Vagina (tissue), 2 donors: ENCODE measurements at regions of chr7 and their contacts with region 1.

Region 1: GRCh38 chr7:139777948-139778841 is at the start of gene HIPK2:
- DNase-seq: no peak
- H3K4me3 ChIP-seq: peak within 1 kb of the TSS; percentile 63 to 92
- H3K27ac ChIP-seq: peak within 1 kb of the TSS; percentile 95
- H3K4me1 ChIP-seq: peaks cover 23% of the 10 kb centered on the region
- H3K27me3 ChIP-seq: no peaks in the 10 kb centered on the region
- CTCF ChIP-seq: no peak
- POLR2A ChIP-seq: no peak
- total RNA-seq, gene HIPK2: 21.9 TPM

Region 2: DNA sequence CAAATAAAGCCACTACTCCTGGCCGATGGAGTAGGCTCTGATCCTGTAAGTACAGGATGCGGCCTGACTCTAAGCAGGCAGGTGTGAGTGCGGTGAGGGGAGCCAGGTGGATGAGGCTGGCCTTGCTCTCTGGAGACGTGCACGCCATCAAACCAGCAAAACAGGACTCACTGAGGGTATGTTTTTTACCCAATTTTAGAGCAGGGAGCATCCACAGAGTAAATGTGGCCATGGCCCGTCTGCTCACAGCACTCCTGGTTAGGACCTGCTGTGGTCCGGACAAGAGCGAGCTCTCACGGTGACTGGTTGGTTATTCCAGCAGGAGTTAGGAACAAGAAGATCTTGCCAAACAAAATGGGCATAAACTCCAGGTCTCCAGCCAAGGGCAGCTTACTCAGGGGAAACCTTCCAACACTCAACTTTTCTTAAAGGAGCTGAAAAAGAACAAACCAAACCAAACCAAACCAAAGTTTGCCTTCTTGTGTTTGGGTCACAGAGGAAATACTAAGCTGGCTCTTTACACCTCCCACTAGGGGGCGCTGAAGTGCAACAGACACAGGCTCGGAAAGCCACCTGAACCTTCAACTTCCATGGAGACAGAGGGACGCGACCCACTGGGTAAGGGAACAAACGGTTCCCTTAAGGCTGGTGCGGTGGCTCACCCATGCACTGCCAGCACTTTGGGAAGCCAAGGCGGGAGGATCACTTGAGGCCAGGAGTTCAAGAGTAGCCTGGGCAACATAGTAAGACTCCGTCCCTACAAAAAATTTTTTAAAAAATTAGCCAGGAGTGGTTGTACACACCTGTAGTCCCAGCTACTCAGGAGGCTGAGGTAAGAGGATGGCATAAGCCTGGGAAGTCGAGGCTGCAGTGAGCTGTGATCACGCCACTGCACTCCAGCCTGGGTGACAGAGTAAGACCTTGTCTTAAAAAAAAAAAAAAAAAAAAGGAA is 132.3 kb before region 1 on chr7:
- intact Hi-C with region 1: loop called (anchors 5 kb)
- DNase-seq: no peak
- H3K4me3 ChIP-seq: no peak overlapping the region
- H3K27ac ChIP-seq: no peak overlapping the region
- H3K4me1 ChIP-seq: peaks cover 5% of the 10 kb centered on the region
- H3K27me3 ChIP-seq: no peaks in the 10 kb centered on the region
- CTCF ChIP-seq: peak; percentile 76 to 89 (median 78)
- POLR2A ChIP-seq: no peak

Region 3: DNA sequence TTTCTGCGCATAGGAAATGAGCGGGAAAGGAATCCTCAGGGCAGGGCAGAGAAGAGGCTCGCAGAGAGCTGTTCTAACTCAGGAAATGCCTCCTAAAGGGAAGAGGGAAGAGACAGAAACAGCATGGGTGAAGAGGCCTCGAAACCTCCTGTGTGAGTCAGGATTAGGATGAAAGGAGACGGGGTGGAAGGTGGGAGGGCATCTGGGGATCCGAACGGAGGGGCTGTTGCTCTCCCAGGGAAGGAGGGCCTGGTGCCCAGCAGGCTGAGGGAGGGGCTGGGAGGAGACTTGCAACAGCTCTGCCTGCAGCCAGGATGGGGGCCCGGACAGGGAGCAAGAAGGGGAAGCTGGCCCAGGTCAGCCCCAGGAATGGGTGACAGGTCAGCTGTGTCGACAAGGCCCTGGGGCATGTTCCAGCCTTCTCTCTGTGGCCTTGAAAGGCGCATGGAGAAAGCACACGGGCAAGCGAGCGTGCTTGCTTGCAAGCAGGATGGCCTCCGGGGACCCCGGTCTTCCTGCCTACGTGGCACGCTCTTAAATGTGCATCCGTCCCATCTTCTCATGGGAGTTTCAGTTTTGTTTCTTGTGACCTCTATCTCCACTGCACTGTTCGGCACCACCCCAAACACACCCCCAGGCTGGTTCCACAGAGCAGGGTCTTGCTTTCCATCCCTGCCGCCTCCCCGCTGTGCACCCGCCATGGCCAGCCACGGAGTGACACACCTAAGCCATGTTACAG is 63.9 kb before region 1 on chr7:
- intact Hi-C with region 1: loop called (anchors 10 kb)
- DNase-seq: no peak
- H3K4me3 ChIP-seq: no peak overlapping the region
- H3K27ac ChIP-seq: peak overlapping the region; percentile 23
- H3K4me1 ChIP-seq: peaks cover 13% of the 10 kb centered on the region
- H3K27me3 ChIP-seq: no peaks in the 10 kb centered on the region
- CTCF ChIP-seq: no peak
- POLR2A ChIP-seq: no peak

Region 4: GRCh38 chr7:139737221-139738100 is 40.7 kb before region 1 on chr7:
- intact Hi-C with region 1: loop called (anchors 5 kb)
- DNase-seq: peak in 1 of 2 donors; percentile 75
- H3K4me3 ChIP-seq: no peak overlapping the region
- H3K27ac ChIP-seq: peak overlapping the region; percentile 55
- H3K4me1 ChIP-seq: peaks cover 81% of the 10 kb centered on the region
- H3K27me3 ChIP-seq: no peaks in the 10 kb centered on the region
- CTCF ChIP-seq: no peak
- POLR2A ChIP-seq: no peak

Region 5: GRCh38 chr7:140003913-140004382 is 225.8 kb after region 1 on chr7:
- intact Hi-C with region 1: loop called (anchors 5 kb)
- DNase-seq: no peak
- H3K4me3 ChIP-seq: no peak overlapping the region
- H3K27ac ChIP-seq: no peak overlapping the region
- H3K4me1 ChIP-seq: no peaks in the 10 kb centered on the region
- H3K27me3 ChIP-seq: no peaks in the 10 kb centered on the region
- CTCF ChIP-seq: peak in 2 of 3 experiments; percentile 14 to 34
- POLR2A ChIP-seq: no peak